ENCODE measurements at regions of chr10 and their contacts with region 1.

Region 1: GRCh38 chr10:10677479-10677878 is 340.2 kb upstream of the CELF2 start:
- DNase-seq: peak; percentile 80
- ATAC-seq: peak; percentile 95
- H3K4me3 ChIP-seq: no peak overlapping the region
- H3K27ac ChIP-seq: no peak overlapping the region
- H3K4me1 ChIP-seq: no peaks in the 10 kb centered on the region
- H3K27me3 ChIP-seq: no peaks in the 10 kb centered on the region; the same call in 1 of the 2 replicates
- CTCF ChIP-seq: peak; percentile 66
- POLR2A ChIP-seq: no peak
- RAD21 ChIP-seq: peak; percentile 91

Region 2: GRCh38 chr10:9331583-9332008 is 1345.9 kb before region 1 on chr10:
- CTCF ChIA-PET with region 1: no interaction called
- POLR2A ChIA-PET with region 1: no interaction called
- dilution Hi-C with region 1: no loop called
- in situ Hi-C with region 1: loop called (anchors 25 kb)
- intact Hi-C with region 1: no loop called
- DNase-seq: peak; percentile 65
- ATAC-seq: peak; percentile 77
- H3K4me3 ChIP-seq: no peak overlapping the region
- H3K27ac ChIP-seq: no peak overlapping the region
- H3K4me1 ChIP-seq: no peaks in the 10 kb centered on the region
- H3K27me3 ChIP-seq: no peaks in the 10 kb centered on the region; the same call in 1 of the 2 replicates
- CTCF ChIP-seq: peak; percentile 92
- POLR2A ChIP-seq: no peak
- RAD21 ChIP-seq: peak; percentile 80

Region 3: DNA sequence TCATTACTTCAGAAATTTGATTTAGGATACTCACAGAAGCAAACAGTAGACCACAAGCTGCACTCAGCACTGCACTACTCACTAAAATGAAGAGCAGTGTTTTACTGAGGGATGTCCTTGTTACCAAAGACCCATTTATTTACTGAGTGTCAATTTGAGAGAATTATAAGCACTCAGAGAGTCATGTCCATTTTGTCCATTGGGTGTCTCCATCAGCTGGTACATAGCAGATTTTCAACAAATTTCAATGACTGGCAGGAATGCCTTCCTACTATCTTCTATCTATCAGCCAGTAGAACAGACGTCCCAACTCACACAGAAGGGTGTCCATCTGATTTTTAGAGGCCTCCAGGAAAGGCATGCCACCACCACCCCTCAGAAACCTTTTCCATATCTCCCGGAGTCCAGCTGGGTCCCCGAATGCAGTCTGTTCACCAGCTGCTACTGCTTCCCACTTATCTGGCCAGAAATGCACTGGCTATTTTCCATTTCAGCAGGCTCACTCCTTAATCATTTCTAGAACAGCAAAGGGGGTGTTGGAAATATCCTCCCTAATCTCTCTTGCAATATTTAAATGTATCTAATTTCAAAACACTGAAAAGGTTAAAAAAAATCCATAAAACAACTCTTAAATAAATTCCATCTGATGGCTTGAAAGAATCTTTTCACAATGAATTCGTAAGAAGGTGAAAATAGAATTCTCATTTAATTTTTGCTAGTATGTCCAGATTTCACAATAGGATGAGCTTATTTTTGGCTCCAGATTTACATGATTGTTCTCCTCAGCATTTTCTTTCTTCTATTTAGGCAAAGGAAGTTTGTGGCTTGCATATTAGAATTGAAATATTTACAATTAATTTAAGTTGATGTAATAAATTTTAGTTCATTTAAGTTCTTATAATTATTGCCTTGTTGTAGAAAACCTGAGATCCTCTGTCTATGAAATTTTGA is 823.8 kb before region 1 on chr10:
- CTCF ChIA-PET with region 1: no interaction called
- POLR2A ChIA-PET with region 1: no interaction called
- dilution Hi-C with region 1: no loop called
- in situ Hi-C with region 1: no loop called
- intact Hi-C with region 1: loop called (anchors 10 kb)
- DNase-seq: no peak
- ATAC-seq: no peak; the same call in 1 of the 2 replicates
- H3K4me3 ChIP-seq: no peak overlapping the region
- H3K27ac ChIP-seq: no peak overlapping the region
- H3K4me1 ChIP-seq: no peaks in the 10 kb centered on the region
- H3K27me3 ChIP-seq: no peaks in the 10 kb centered on the region
- CTCF ChIP-seq: no peak
- POLR2A ChIP-seq: no peak
- RAD21 ChIP-seq: no peak

Region 4: DNA sequence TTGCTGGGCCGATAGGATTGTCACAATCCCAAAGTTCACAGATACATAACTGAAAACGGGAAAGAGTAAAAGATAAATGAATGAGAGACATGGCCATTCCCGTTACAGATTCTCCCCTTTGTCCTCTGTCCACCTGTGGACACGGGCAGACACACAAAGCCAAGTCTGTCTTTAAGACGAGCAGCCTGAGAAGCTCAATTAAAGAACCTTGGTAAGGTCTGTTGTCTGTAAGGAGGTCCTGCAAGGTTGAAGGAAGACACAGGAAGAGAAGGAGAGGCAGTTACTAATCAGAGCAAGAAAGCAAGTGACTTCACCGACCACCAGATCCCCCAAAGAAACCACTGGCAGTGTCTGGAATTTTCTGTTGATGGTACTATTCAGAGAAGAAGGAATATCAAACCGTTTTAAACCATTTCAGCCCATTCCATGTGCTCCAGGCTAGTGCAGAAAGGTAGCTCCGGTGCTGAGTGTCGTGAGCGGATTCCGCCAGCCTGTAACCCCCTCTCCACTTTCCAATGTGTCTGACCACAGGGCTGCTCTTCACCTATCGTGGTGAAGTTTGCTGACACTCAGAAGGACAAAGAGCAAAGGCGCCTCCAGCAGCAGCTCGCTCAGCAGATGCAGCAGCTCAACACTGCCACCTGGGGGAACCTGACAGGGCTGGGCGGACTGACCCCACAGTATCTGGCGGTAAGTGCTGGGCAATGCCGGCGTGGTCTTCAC is 592.8 kb after region 1 on chr10:
- CTCF ChIA-PET with region 1: no interaction called
- POLR2A ChIA-PET with region 1: no interaction called
- dilution Hi-C with region 1: no loop called
- in situ Hi-C with region 1: no loop called
- intact Hi-C with region 1: loop called (anchors 1 kb)
- DNase-seq: peak; percentile 53
- ATAC-seq: peak; percentile 99
- H3K4me3 ChIP-seq: no peak overlapping the region
- H3K27ac ChIP-seq: no peak overlapping the region
- H3K4me1 ChIP-seq: no peaks in the 10 kb centered on the region
- H3K27me3 ChIP-seq: no peaks in the 10 kb centered on the region; the same call in 1 of the 2 replicates
- CTCF ChIP-seq: peak; percentile 73
- POLR2A ChIP-seq: no peak
- RAD21 ChIP-seq: peak; percentile 83

Measured in IMR-90 (cell line).